Endothelial cell of umbilical vein (primary cell): ENCODE measurements at regions of chr4 and their contacts with region 1.

Region 1: GRCh38 chr4:76504613-76505465 is 69.8 kb downstream of the SHROOM3 start:
- DNase-seq: peak; percentile 61
- H3K4me3 ChIP-seq: no peak overlapping the region
- H3K27ac ChIP-seq: no peak overlapping the region
- H3K4me1 ChIP-seq: no peaks in the 10 kb centered on the region
- H3K27me3 ChIP-seq: peaks cover 12 to 14% of the 10 kb centered on the region in 2 experiments
- CTCF ChIP-seq: peak; percentile 42 to 46
- POLR2A ChIP-seq: no peak

Region 2: GRCh38 chr4:76430519-76431388 is 74.1 kb before region 1 on chr4:
- CTCF ChIA-PET with region 1: interaction called, 392 read pairs
- POLR2A ChIA-PET with region 1: no interaction called
- dilution Hi-C with region 1: no loop called
- intact Hi-C with region 1: loop called (anchors 1 kb)
- DNase-seq: peak; percentile 61
- H3K4me3 ChIP-seq: no peak overlapping the region
- H3K27ac ChIP-seq: no peak overlapping the region
- H3K4me1 ChIP-seq: no peaks in the 10 kb centered on the region
- H3K27me3 ChIP-seq: peaks cover 14 to 26% of the 10 kb centered on the region in 2 experiments
- CTCF ChIP-seq: peak; percentile 39
- POLR2A ChIP-seq: no peak

Region 3: GRCh38 chr4:76447393-76447851 is 57.4 kb before region 1 on chr4:
- CTCF ChIA-PET with region 1: interaction called, 12 read pairs
- POLR2A ChIA-PET with region 1: no interaction called
- dilution Hi-C with region 1: no loop called
- intact Hi-C with region 1: no loop called
- DNase-seq: peak; percentile 83
- H3K4me3 ChIP-seq: no peak overlapping the region
- H3K27ac ChIP-seq: no peak overlapping the region
- H3K4me1 ChIP-seq: peaks cover 24% of the 10 kb centered on the region
- H3K27me3 ChIP-seq: peaks cover 12 to 19% of the 10 kb centered on the region in 2 experiments
- CTCF ChIP-seq: no peak
- POLR2A ChIP-seq: no peak